ENCODE measurements at regions of chr3 and their contacts with region 1.

Region 1: GRCh38 chr3:47824541-47825473 is 21.9 kb downstream of the DHX30 start:
- DNase-seq: peak; percentile 79
- ATAC-seq: peak; percentile 98
- H3K4me3 Mint-ChIP-seq: peak overlapping the region; percentile 88
- H3K27ac Mint-ChIP-seq: peak overlapping the region; percentile 73
- H3K4me1 Mint-ChIP-seq: peaks cover 38% of the 10 kb centered on the region
- H3K27me3 Mint-ChIP-seq: no peaks in the 10 kb centered on the region
- CTCF ChIP-seq: peak; percentile 39

Region 2: DNA sequence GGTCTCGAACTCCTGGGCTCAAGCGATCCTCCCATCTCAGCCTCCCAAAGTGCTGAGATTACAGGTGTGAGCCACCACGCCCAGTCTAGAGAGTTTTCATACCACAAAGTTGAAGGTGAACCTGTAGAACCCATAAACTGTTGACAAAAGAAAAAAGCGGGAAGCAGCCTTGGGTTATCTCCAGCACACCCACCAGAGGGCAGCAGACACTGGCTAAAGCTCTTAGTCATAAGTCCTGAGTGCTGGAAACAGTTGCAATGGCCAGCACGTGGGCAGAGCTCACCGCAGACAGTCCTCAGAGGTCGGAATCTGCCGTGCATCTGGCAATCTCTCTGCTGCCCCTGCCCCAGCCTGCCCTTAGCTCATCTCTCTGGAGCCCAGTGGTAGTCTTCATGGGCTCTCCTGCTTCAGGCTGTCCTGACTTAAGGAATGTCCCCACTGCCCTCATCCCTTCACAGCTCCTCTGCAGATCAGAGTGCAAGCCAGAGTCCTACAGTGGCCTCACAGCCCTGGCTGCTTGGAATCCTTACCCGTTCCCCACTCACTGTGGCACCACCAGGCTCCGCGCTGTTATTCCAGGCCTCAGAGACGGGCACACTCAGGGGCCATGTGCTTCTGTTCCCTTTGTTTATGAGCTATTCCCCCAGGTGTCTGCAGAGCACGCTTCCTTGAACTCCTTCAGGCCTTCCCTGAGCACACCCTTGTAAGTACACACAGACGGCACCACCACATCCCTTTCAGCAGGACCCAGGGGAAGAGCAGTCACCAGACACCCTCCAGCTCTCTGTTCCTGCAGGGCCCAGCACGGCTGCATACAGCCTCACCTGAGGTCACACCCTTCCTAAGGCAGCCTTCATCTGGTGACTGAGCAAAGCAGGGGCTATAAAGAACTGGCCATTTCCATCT is 302.5 kb before region 1 on chr3:
- CTCF ChIA-PET with region 1: interaction called, 16 read pairs
- POLR2A ChIA-PET with region 1: interaction called, 4 read pairs
- intact Hi-C with region 1: loop called (anchors 1 kb)
- DNase-seq: peak; percentile 55
- ATAC-seq: peak; percentile 95
- H3K4me3 Mint-ChIP-seq: no peak overlapping the region
- H3K27ac Mint-ChIP-seq: no peak overlapping the region
- H3K4me1 Mint-ChIP-seq: peaks cover 8% of the 10 kb centered on the region
- H3K27me3 Mint-ChIP-seq: no peaks in the 10 kb centered on the region
- CTCF ChIP-seq: peak; percentile 20

Region 3: DNA sequence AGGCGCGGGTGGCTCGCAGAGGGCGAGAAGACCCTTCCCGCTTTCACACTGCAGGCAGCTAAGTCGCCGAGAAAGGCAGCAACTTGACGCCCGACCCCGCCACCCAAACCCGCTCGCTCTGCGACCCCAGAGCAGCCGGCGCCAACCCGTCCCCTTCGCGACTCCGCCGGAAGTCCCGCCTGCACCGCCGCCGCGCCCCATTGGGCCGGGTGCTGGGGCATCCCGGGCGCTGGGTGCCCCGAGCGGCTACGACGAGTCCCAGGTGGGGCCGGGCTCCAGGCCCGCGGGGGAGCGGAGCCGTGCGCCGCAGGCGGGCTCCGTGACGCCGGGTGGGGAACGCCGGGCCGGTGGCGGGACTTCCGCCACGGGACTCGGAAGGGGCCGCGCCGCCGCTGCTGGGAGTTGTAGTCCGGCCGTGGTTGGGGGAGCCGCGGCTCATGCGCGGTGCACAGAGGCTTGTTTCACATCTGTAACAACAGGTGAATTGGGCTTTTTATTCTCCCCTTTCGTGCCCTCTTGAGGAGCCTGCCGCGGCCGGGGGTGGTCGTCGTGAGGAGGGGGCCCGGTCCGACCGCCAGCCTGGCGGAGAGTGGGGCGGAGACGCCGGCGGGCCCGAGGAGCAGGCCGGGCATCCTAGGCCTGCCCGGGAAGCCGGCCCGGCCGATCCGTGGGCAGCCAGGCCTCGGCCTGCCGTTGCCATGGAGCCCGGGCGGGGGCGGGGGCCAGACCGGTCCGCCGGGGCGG is 21.9 kb before region 1 on chr3 and contains the start of gene DHX30:
- CTCF ChIA-PET with region 1: interaction called, 3 read pairs
- POLR2A ChIA-PET with region 1: interaction called, 12 read pairs
- intact Hi-C with region 1: loop called (anchors 1 kb)
- DNase-seq: peak; percentile 87
- ATAC-seq: peak; percentile 93
- H3K4me3 Mint-ChIP-seq: peak within 1 kb of the TSS; percentile 93
- H3K27ac Mint-ChIP-seq: peak within 1 kb of the TSS; percentile 92
- H3K4me1 Mint-ChIP-seq: peaks cover 20% of the 10 kb centered on the region
- H3K27me3 Mint-ChIP-seq: no peaks in the 10 kb centered on the region
- CTCF ChIP-seq: no peak
- total RNA-seq, gene DHX30: 71.3 and 77.4 TPM in 2 replicates

Region 4: DNA sequence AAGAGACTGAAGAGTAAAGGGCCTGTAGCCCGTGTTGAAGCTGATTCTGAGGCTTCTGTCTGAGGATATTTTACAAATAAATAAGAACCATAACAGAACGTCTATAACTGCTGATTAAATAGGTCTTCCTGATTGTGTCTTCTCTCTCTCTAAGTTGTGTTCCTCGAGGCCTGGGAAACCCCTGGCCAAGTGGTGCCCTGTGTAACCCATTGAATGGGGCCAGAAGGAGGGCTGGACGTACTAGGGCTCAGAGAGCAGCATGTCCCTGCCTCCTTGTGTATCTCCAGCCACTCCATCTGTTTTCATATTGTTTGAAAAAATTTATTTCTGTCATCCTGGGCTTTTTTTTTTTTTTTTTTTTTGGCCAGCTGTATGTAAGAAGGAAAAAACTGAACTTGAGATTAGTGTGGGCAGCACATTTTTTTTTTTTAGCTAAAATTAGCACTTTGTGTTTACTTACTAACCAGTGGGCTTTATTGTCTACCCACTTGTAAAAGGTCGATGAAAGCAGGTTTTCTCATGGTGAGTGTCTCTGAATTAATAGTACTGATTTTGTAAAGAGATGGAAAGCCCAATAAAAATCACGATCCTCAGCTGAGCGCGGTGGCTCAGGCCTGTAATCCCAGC is 11.1 kb before region 1 on chr3:
- CTCF ChIA-PET with region 1: interaction called, 14 read pairs
- POLR2A ChIA-PET with region 1: interaction called, 3 read pairs
- intact Hi-C with region 1: no loop called
- DNase-seq: no peak
- ATAC-seq: no peak
- H3K4me3 Mint-ChIP-seq: no peak overlapping the region
- H3K27ac Mint-ChIP-seq: no peak overlapping the region
- H3K4me1 Mint-ChIP-seq: no peaks in the 10 kb centered on the region
- H3K27me3 Mint-ChIP-seq: no peaks in the 10 kb centered on the region
- CTCF ChIP-seq: no peak

Region 5: DNA sequence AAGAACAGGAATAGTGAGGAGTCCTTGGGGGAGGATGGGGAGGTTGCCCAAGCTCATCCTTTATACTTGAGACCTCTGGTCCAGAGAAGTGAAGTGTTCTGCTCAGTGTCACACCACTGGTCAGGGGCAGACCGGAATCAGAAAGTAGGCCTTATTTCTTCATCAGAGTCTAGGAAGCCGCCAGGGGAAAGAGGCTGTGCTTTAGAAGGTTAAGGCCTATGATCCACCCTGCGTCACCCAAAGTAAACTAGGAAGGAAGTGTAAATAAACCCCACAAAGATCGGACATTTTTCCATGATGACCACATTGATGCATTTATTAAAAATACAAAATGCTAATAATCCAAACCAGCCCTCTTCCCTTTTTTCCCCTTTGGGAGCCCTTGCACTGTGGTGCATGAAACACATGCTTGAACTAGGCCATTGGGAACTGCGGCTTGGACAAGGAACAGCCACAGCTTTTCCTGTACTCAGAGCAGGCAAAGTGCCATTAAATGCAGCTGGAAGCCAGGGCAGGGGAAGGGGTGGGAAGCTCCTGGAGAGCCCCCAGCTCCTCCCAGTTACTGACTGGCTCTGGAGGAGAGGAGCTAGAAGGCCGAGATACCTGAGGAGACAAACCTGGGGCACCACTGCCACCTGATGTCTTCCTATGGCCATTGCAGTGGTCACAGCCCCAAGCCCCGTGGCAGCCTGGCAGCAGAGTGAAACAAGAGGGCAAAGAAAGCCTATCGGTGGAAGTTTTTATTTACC is 326.4 kb after region 1 on chr3:
- CTCF ChIA-PET with region 1: interaction called, 13 read pairs
- POLR2A ChIA-PET with region 1: interaction called, 3 read pairs
- intact Hi-C with region 1: loop called (anchors 1 kb)
- DNase-seq: peak; percentile 30
- ATAC-seq: peak; percentile 89
- H3K4me3 Mint-ChIP-seq: no peak overlapping the region
- H3K27ac Mint-ChIP-seq: no peak overlapping the region
- H3K4me1 Mint-ChIP-seq: no peaks in the 10 kb centered on the region
- H3K27me3 Mint-ChIP-seq: no peaks in the 10 kb centered on the region
- CTCF ChIP-seq: no peak

Measured in activated B cell treated with CpG ODN at 0.5 μM for 24 hours (primary cell).